Left cardiac atrium (tissue), 4 donors: ENCODE measurements at regions of chr6 and their contacts with region 1.

Region 1: DNA sequence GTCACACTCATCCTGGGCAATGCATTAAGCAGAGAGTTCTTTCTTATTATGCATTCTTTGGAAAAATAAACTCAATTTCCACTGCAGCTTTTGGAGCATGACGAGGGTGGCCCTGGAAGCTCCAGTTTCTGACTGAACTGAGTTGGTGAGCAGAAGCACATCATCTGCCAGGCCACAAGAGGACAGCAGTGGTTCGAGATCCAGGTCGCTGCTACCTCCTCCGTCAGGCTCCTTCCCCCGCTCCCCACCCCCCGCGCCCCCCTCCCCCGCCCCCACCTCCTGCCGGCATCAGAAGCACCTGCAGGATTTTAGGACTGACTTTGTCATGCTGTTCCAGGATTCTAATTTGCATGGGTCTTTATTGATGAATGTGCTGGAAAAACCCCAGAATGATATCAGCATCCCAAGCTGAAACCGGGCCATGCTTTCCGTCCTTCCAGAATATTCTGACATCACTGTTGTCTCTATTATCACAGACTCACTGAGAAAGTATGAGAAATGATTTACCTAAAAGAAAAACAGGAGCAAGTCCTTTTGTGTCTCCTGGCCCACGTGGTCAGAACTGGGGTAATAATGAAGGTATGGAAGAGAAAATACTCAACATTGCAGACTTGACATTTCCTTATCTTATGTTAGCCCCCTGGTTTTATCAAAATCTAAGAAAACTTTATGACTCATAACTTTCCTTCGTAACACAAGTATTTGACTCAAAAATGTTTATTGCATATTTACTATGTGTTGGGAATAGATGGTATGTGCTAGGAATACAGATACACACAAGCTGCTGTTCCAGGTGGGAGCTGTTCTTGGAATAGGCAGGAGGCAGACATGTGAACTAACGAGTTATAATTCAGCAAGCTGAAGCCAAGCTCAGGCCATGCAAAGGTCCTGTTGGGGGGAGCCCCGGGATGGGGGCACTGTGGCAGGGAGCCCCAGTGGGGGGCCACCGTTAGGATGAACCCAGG is 220.2 kb upstream of the EXOC2 start:
- DNase-seq: no peak
- ATAC-seq: peak in 1 of 2 donors; percentile 46

Region 2: DNA sequence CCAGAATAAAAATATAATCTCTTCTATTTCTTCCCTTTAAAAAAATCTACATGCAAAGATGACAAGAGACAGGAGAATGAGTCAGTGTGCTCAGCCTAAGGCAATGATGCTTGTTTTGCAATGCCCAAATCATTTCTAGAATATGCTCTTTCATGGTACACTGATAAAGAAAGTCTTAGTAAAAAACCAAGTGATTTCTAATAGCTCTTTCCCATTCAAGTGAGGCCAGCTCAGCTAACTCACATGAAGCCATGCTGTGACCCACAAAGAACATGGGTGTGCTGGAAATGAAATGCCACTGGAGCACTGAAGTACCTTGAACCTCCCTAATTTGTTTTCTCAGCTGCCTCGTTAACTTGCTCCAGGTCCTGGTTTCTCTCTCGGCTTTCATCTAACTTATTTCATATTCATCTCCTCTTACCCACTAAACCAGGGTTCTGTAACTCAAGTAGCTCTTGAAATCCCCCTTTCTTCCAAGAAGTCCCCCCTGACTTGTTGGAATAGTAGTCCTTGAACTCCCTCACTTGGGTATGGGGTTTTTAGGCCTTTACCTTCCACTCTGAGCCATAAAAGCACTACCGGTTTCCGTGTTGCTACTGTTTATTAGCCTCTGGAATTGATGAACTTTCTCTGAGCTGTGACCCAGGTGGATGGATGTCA is 428.9 kb before region 1 on chr6:
- intact Hi-C with region 1: no loop called
- DNase-seq: no peak
- ATAC-seq: no peak

Region 3: GRCh38 chr6:971981-972640 is 59.0 kb after region 1 on chr6:
- intact Hi-C with region 1: no loop called
- DNase-seq: no peak
- ATAC-seq: no peak

Region 4: DNA sequence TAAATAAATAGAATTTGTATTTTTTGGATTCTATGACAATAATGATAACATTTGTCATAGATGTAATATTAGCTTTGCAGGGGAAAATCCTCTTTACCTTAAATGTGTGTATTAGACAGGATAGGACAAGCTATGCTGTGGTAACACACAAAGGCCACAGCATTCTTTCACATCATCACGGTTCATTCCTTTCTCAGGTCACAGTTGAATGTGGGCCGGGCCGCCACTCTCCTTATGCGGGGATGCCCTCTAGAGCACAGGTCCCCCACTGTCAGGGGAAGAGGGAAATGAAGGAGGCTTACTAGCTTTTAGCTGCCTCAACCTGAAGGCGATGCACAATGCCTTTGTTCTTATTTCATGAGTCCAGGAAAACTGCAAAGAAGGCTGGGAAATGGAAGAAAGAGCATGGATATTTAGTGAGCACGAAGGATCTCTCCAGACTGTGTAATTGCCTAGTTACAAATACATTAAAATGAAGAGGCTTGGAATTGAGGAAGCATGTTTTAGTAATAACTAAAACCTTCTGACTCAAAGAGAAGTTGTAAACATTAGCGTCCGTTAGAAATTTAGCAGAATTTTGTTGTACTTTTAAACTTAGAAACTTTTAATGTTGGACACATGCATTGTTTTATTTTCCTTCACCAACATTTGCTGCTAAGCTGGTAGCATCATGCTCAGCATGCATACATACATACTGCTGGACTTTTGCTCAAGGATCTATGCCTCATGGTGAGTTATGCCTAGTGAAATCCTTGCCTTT is 149.8 kb after region 1 on chr6:
- intact Hi-C with region 1: no loop called
- DNase-seq: no peak
- ATAC-seq: no peak

Region 5: DNA sequence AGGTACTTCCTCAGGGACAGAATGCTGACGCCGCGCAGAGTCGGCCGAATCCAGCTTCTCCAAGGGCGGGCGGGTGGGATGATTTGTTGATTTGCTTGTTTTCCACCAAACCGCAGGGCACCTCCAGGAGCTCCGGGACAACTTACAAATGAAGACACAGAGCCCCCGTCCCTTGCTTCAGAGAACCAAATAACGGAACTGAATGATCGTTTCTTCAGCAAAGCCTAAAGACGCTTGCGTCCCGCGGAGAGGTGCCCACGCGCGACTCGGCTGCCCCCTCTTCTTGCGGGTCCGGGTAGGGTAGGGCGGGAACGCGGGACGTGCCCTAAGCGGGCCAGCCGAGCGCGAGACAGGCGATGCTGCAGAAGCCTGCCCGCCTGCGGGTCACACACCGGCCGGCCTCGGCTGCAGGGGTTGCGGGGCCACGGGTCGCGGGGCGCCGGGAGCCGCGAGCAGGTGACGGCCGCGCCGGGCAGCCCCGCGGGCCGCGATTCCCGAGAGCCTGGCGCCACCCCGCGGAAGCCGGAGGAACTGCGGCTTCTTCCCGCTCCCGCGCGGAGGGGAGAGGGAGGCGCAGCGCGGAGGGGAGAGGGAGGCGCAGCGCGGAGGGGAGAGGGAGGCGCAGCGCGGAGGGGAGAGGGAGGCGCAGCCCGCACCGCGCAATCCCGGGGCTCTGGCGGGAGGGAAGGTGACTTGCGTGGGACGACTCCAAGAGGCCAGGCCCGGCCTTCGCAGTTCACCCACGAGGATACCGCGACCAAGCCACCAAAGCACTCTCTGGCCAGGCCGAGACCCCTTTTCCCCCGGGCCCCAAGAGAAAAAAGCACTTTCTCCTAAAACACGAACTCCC is 468.6 kb after region 1 on chr6:
- intact Hi-C with region 1: loop called in 1 of 2 experiments (anchors 5 kb)
- DNase-seq: peak; percentile 50
- ATAC-seq: peak; percentile 83 to 84

Region 6: GRCh38 chr6:1396952-1397868 is 484.1 kb after region 1 on chr6:
- intact Hi-C with region 1: loop called in 1 of 2 experiments (anchors 10 kb)
- DNase-seq: peak; percentile 69
- ATAC-seq: peak; percentile 65 to 67

Region 7: DNA sequence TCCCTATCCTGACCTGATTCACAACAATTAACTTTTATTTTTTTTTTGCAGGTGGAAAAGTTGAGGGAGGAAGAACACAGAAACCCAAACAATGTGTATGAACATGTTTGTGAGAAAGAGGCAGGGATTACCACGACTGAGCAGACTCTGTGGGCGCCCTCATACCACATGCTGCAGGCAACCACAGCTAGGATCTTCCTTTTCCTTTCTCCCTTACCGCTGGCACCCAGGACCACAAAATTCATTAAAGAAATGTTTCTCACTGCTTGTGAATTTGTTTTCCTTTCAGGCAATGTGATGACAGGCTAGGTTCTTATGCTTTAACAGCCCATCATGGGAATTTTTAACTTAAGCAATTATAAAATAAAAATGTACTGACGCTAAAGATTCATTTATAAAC is 1045.1 kb after region 1 on chr6:
- intact Hi-C with region 1: no loop called
- DNase-seq: no peak
- ATAC-seq: no peak